ENCODE measurements at regions of chr7 and their contacts with region 1.

Region 1: DNA sequence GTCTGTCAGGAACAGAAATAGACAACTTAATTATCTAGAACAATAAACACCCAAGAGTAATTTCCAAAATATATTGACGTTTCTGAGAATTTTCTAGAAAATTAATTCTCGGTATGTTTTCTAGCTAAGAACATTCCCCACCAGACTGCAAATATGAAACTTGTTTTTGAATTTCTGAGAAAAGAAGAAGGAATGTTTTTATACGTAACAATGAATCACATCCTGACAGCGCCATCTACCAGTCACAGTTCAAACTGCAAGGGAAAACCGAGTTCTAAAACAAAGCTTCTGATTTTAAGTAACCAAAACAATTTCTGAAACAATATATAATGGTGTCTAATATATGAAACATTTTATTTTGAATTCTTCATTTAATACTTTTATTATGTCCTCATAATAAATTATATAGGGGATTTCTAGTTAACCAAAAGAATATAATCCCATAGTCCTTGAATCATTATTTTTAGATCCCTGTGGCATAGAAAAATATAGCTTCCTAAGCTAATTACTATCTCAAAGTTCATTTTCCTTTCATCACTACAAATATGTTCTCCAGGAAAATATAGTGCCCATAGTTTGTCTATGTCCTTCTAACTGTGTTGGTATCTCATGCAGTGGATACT is 34.5 kb upstream of the MEOX2 start:
- DNase-seq: peak; percentile 2
- ATAC-seq: no peak
- H3K4me3 ChIP-seq: no peak overlapping the region
- H3K27ac ChIP-seq: no peak overlapping the region
- H3K4me1 ChIP-seq: no peaks in the 10 kb centered on the region
- H3K27me3 ChIP-seq: no peaks in the 10 kb centered on the region
- CTCF ChIP-seq: peak; percentile 46
- EP300 ChIP-seq: no peak
- POLR2A ChIP-seq: no peak
- RAD21 ChIP-seq: no peak

Region 2: GRCh38 chr7:14717816-14718215 is 1003.1 kb before region 1 on chr7:
- CTCF ChIA-PET with region 1: no interaction called
- POLR2A ChIA-PET with region 1: no interaction called
- in situ Hi-C with region 1: no loop called
- intact Hi-C with region 1: loop called (anchors 5 kb)
- DNase-seq: no peak
- ATAC-seq: no peak
- H3K4me3 ChIP-seq: no peak overlapping the region
- H3K27ac ChIP-seq: no peak overlapping the region
- H3K4me1 ChIP-seq: no peaks in the 10 kb centered on the region
- H3K27me3 ChIP-seq: no peaks in the 10 kb centered on the region
- CTCF ChIP-seq: 0 out of 2 replicates have a peak, but pooled peaks have one; percentile 8
- EP300 ChIP-seq: no peak
- POLR2A ChIP-seq: no peak
- RAD21 ChIP-seq: no peak

Region 3: GRCh38 chr7:15305002-15305600 is 415.9 kb before region 1 on chr7:
- CTCF ChIA-PET with region 1: interaction called, 4 read pairs
- POLR2A ChIA-PET with region 1: no interaction called
- in situ Hi-C with region 1: loop called (anchors 25 kb)
- intact Hi-C with region 1: loop called (anchors 1 kb)
- DNase-seq: peak; percentile 33
- ATAC-seq: no peak
- H3K4me3 ChIP-seq: no peak overlapping the region
- H3K27ac ChIP-seq: no peak overlapping the region
- H3K4me1 ChIP-seq: no peaks in the 10 kb centered on the region
- H3K27me3 ChIP-seq: no peaks in the 10 kb centered on the region
- CTCF ChIP-seq: peak; percentile 40
- EP300 ChIP-seq: no peak
- POLR2A ChIP-seq: no peak
- RAD21 ChIP-seq: no peak

Region 4: DNA sequence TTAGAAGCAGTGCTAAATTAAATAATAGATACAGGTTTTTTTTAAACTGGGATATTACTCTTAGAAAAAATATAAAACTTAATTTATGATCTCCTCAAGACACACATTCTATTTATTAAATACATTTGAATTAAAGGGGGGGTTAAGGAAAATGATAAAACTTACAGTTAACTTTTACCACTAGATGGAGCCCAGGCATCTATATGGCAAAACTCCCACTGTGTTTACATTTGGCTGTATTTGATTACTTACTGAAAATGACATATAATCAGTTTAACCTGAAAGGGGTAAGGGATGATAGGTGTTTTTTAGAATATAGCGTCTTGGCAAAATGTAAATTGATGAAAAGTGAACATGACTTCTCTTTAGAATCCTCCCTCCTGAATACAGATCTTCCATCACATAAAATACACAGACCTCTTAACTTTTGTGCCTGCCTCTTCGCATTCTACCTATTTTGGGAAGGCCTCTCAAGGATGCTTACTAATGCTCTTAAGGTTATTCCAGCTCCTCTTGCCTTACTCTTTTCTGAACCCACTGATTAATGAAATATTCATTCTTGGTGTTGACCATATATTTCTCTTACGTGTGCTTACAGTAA is 394.8 kb before region 1 on chr7:
- CTCF ChIA-PET with region 1: interaction called, 9 read pairs
- POLR2A ChIA-PET with region 1: no interaction called
- in situ Hi-C with region 1: loop called (anchors 25 kb)
- intact Hi-C with region 1: loop called (anchors 1 kb)
- DNase-seq: peak; percentile 3
- ATAC-seq: no peak
- H3K4me3 ChIP-seq: no peak overlapping the region
- H3K27ac ChIP-seq: no peak overlapping the region
- H3K4me1 ChIP-seq: no peaks in the 10 kb centered on the region
- H3K27me3 ChIP-seq: no peaks in the 10 kb centered on the region
- CTCF ChIP-seq: no peak
- EP300 ChIP-seq: no peak
- POLR2A ChIP-seq: no peak
- RAD21 ChIP-seq: no peak

Region 5: DNA sequence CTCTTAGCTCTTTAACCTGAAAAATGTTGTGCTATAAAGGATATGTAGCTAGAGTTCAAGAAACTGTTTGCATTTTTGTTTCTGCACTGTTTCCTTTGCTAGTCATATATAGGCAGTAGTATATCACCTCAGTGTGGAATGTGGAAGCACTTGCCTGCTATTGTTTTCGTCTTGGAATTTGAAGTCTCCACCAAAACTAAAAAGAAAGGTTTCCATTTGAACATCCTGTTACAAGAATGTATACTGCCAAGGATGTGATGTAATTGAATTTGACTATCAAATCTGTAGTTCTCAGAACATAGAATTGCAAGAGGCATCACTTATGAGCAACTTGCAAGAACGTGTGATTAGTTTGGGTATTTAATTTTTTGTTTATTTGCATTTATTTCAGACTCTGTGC is 16.6 kb after region 1 on chr7:
- CTCF ChIA-PET with region 1: no interaction called
- POLR2A ChIA-PET with region 1: no interaction called
- in situ Hi-C with region 1: no loop called
- intact Hi-C with region 1: no loop called
- DNase-seq: no peak
- ATAC-seq: no peak
- H3K4me3 ChIP-seq: no peak overlapping the region
- H3K27ac ChIP-seq: no peak overlapping the region
- H3K4me1 ChIP-seq: no peaks in the 10 kb centered on the region
- H3K27me3 ChIP-seq: no peaks in the 10 kb centered on the region
- CTCF ChIP-seq: no peak
- EP300 ChIP-seq: no peak
- POLR2A ChIP-seq: no peak
- RAD21 ChIP-seq: no peak